CD8-positive, alpha-beta T cell (primary cell): ENCODE measurements at regions of chr4 and their contacts with region 1.

Region 1: DNA sequence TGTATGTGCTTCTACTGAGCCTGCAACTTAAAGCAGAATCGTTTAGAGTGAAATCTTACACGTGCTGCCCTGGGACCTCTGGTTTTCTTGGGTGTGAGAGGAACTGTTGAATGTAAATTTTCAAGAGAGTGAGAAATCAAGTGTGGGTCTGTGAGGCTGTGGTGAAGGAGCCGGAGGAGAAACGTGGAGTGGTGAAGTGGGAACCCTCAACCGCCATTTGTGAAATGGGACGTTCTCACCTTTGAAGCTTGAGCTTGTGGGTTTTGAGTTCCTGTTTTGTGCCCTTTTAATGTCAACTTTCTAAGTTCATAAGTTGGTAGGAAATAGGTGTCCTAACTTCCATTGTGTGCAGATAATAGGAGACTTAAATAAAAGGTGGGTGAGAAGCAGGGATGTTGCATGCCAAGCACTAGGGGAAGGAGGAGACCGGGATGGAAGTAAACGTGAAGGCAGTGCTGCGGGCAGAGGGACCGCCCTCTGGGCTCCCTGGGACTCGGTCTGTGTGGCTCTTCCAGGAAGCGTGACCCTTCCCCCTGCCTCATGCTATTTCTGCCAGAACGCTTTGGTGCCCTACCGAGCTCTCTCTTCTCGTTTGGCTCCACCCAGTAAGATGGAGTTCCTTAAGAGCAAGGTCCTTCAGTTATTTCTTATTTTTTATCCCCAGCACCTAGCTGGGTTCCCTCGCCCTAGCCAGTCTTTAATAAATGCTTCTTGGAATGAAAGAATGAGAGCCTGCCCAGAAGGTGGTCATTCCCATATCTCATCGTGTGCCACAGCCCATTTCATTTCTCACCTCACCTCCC is 56.0 kb downstream of the TMEM131L start:
- DNase-seq: peak in 8 of 9 experiments; percentile 37 to 90 (median 66)
- ATAC-seq: peak; percentile 54
- H3K4me3 ChIP-seq: peak overlapping the region; percentile 21 to 28
- H3K4me3 Mint-ChIP-seq: peak overlapping the region; percentile 77
- H3K27ac ChIP-seq: peak overlapping the region; percentile 22 to 75
- H3K27ac Mint-ChIP-seq: peak overlapping the region; percentile 94
- H3K4me1 ChIP-seq: peaks cover 87% of the 10 kb centered on the region
- H3K4me1 Mint-ChIP-seq: peaks cover 91% of the 10 kb centered on the region
- H3K27me3 ChIP-seq: no peaks in the 10 kb centered on the region
- H3K27me3 Mint-ChIP-seq: no peaks in the 10 kb centered on the region
- CTCF ChIP-seq: no peak

Region 2: GRCh38 chr4:153497988-153498967 is 23.9 kb before region 1 on chr4:
- CTCF ChIA-PET with region 1: interaction called, 5 read pairs
- POLR2A ChIA-PET with region 1: interaction called, 7 read pairs
- intact Hi-C with region 1: loop called in 1 of 2 experiments (anchors 2 kb)
- DNase-seq: peak in 2 of 9 experiments; percentile 27 to 62
- ATAC-seq: peak; percentile 15
- H3K4me3 ChIP-seq: peak overlapping the region in 1 of 2 experiments; percentile 37
- H3K4me3 Mint-ChIP-seq: peak overlapping the region; percentile 66
- H3K27ac ChIP-seq: peak overlapping the region; percentile 54 to 78
- H3K27ac Mint-ChIP-seq: peak overlapping the region; percentile 97
- H3K4me1 ChIP-seq: peaks cover 92% of the 10 kb centered on the region
- H3K4me1 Mint-ChIP-seq: peaks cover 90% of the 10 kb centered on the region
- H3K27me3 ChIP-seq: no peaks in the 10 kb centered on the region
- H3K27me3 Mint-ChIP-seq: no peaks in the 10 kb centered on the region
- CTCF ChIP-seq: no peak

Region 3: GRCh38 chr4:153535772-153536513 is 13.7 kb after region 1 on chr4:
- CTCF ChIA-PET with region 1: interaction called, 4 read pairs
- POLR2A ChIA-PET with region 1: interaction called, 3 read pairs
- intact Hi-C with region 1: loop called in 1 of 2 experiments (anchors 1 kb)
- DNase-seq: peak in 2 of 9 experiments; percentile 21 to 56
- ATAC-seq: peak; percentile 67
- H3K4me3 ChIP-seq: no peak overlapping the region
- H3K4me3 Mint-ChIP-seq: peak overlapping the region; percentile 16
- H3K27ac ChIP-seq: peak overlapping the region in 1 of 2 experiments; percentile 61
- H3K27ac Mint-ChIP-seq: peak overlapping the region; percentile 90
- H3K4me1 ChIP-seq: peaks cover 95% of the 10 kb centered on the region
- H3K4me1 Mint-ChIP-seq: peaks cover 89% of the 10 kb centered on the region
- H3K27me3 ChIP-seq: no peaks in the 10 kb centered on the region
- H3K27me3 Mint-ChIP-seq: no peaks in the 10 kb centered on the region
- CTCF ChIP-seq: no peak